ENCODE measurements at regions of chr19 and their contacts with region 1.

Region 1: GRCh38 chr19:3687774-3688706 is 12.2 kb downstream of the PIP5K1C start:
- DNase-seq: peak; percentile 81
- H3K4me3 Mint-ChIP-seq: peak overlapping the region; percentile 77
- H3K27ac Mint-ChIP-seq: no peak overlapping the region
- H3K4me1 Mint-ChIP-seq: peaks cover 38% of the 10 kb centered on the region
- H3K27me3 Mint-ChIP-seq: no peaks in the 10 kb centered on the region

Region 2: DNA sequence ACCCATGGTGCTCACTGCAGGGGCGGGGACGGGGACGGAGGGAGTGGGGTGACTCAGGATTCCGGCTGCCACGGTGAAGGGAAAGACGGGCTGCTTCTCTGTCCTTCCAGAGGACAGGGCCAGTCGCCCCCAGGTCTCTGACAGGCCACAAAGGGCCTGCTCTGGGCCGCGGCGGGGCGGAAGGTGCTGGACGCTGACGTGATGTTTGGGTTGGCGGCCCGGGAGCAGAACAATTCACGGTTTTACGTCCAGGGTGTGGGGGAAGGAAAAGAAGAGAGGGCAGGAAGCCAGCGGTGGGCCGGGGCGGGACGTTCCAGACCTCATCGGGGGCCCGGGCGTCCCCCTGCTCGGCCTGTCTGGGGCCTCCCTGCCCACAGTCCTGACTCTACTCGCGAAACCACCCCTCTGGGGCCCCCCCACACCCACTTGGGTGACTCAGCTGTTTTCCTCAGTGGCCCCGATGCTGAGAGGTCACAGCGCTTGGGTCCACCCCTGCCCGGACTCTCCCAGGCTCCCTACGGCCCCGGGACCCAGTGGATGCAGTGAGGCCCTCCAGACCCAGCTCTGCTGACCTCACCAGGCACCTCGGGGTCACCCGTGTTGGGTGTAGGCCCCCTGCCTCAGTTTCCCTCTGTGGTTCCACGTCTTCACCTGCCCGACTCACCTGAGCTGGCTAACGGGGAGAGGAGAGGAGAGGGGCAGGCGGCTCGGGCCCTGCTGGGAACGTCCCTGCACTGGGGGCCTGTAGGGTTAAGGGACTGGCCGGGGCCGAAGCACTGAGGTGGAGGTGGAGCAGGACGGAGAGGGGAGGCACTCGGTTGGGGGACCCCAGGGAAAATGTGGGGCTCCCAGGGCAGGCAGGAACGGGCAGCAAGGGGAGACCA is 17.0 kb before region 1 on chr19:
- intact Hi-C with region 1: loop called (anchors 2 kb)
- DNase-seq: peak; percentile 65
- H3K4me3 Mint-ChIP-seq: peak overlapping the region; percentile 49
- H3K27ac Mint-ChIP-seq: peak overlapping the region; percentile 56
- H3K4me1 Mint-ChIP-seq: peaks cover 7% of the 10 kb centered on the region
- H3K27me3 Mint-ChIP-seq: no peaks in the 10 kb centered on the region

Region 3: GRCh38 chr19:3743486-3743885 is 55.4 kb after region 1 on chr19:
- intact Hi-C with region 1: no loop called
- DNase-seq: no peak
- H3K4me3 Mint-ChIP-seq: no peak overlapping the region
- H3K27ac Mint-ChIP-seq: no peak overlapping the region
- H3K4me1 Mint-ChIP-seq: peaks cover 5% of the 10 kb centered on the region
- H3K27me3 Mint-ChIP-seq: no peaks in the 10 kb centered on the region

Measured in activated CD4-positive, alpha-beta T cell treated with anti-CD3 and anti-CD28 coated beads, Interleukin-2, amount 10 ng/mL, durations not matched to agents 24 days and 14 days (primary cell).